Activated T-helper 1 cell treated with anti-CD3 and anti-CD28 coated beads, Interleukin-12 subunit alpha, Interleukin-12 subunit beta, Interleukin-2, Interleukin-4 antibody, amounts not matched to agents 30 ng/mL and 10 ng/mL and 1 ng/mL, durations not matched to agents 14 hours and 24 hours and 36 hours (primary cell): ENCODE measurements at regions of chr12 and their contacts with region 1.

Region 1: DNA sequence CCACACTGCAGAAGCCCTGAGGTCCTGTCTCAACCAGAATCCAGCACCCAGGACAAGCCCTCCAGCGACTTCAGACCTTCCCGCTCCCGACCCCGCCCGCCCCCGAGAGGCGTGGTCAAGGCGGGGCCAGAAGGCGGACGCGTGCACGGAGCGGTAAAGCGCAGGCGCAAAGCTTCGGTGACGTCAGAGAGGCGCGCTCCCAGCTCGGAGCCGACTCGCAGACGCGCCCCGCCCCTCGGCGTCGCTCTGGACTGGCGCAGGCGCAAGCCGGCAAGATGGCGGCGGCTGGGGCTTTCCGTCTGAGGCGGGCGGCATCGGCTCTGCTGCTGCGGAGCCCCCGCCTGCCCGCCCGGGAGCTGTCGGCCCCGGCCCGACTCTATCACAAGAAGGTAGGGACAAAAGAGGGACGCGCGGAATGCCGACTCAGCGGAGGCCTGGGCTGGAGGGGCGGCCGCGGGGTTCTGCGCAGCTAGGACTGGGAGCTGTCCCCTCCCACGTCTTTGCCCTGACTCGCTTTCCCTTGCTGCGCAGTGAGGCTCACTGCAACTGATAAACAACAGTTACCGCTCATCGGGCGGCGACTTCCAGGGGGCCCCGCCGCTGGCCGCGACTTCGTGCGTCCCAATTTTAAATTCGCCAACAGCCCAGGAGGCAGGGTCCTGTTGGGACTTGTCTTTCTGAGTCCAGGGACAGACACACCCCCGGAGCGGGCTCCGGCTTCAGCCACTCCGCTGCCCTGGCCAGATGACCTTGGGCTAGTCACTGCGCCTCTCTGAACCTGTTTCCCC is at the start of gene ISCU:
- DNase-seq: peak; percentile 99
- H3K4me3 Mint-ChIP-seq: peak within 1 kb of the TSS; percentile 100
- H3K27ac Mint-ChIP-seq: peak within 1 kb of the TSS; percentile 99
- H3K4me1 Mint-ChIP-seq: peaks cover 58% of the 10 kb centered on the region
- H3K27me3 Mint-ChIP-seq: no peaks in the 10 kb centered on the region
- total RNA-seq, gene ISCU: 73.8 and 74.9 TPM in 2 replicates

Region 2: GRCh38 chr12:107760809-107761501 is 801.6 kb before region 1 on chr12 and contains the start of gene PRDM4:
- intact Hi-C with region 1: loop called (anchors 5 kb)
- DNase-seq: peak; percentile 91
- H3K4me3 Mint-ChIP-seq: peak within 1 kb of the TSS; percentile 92
- H3K27ac Mint-ChIP-seq: peak within 1 kb of the TSS; percentile 89
- H3K4me1 Mint-ChIP-seq: peaks cover 40% of the 10 kb centered on the region
- H3K27me3 Mint-ChIP-seq: peaks cover 3% of the 10 kb centered on the region
- total RNA-seq, gene PRDM4: 28.1 and 30.2 TPM in 2 replicates

Region 3: GRCh38 chr12:108633534-108634248 is 71.1 kb after region 1 on chr12 and contains the start of gene SELPLG:
- intact Hi-C with region 1: loop called (anchors 1 kb)
- DNase-seq: peak; percentile 82
- H3K4me3 Mint-ChIP-seq: peak within 1 kb of the TSS; percentile 94
- H3K27ac Mint-ChIP-seq: peak within 1 kb of the TSS; percentile 99
- H3K4me1 Mint-ChIP-seq: peaks cover 69% of the 10 kb centered on the region
- H3K27me3 Mint-ChIP-seq: no peaks in the 10 kb centered on the region
- total RNA-seq, gene SELPLG: 51.9 and 53.5 TPM in 2 replicates

Region 4: DNA sequence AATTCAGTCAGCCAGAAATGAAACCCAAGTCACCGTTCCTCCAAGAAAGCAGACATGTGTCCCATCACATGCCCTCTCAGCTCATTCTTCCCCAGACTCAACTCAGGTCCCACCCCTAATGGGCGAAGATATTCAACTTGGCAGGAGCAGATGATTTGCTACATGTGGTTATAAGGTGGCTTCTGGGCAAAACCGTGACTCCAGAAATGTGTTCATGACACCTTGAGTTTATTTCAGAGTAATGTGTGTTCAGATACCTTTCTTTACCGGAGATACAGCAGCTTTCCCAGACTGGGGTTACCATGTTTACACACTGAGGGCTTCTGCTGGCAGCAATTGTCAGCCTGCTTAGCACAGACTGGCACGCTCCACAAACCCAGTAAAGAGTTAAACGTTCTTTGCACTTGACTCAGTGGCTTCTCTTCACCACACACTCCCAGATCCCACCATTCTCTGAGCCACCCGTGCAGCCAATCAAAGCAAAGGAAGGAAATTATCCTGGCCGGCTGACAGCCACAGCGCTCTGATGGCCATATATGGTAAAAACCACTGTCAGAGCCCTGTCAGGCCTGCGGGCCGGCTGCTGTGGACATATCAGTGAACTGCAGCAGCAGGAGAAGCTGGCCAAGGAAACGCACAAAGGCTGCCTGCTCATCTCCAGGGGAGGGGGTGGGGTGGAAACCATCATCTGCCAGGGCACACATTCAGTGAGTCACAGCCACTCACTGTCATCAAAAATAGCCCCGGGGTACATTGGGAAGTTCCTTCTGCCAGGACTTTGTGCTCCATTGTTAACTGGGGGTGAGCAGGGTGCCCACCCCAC is 128.8 kb after region 1 on chr12:
- intact Hi-C with region 1: loop called (anchors 1 kb)
- DNase-seq: peak; percentile 50
- H3K4me3 Mint-ChIP-seq: peak overlapping the region; percentile 74
- H3K27ac Mint-ChIP-seq: peak overlapping the region; percentile 95
- H3K4me1 Mint-ChIP-seq: peaks cover 64% of the 10 kb centered on the region
- H3K27me3 Mint-ChIP-seq: no peaks in the 10 kb centered on the region

Region 5: GRCh38 chr12:108856428-108857157 is 294.1 kb after region 1 on chr12:
- intact Hi-C with region 1: loop called (anchors 2 kb)
- DNase-seq: peak; percentile 45
- H3K4me3 Mint-ChIP-seq: peak overlapping the region; percentile 96
- H3K27ac Mint-ChIP-seq: peak overlapping the region; percentile 96
- H3K4me1 Mint-ChIP-seq: peaks cover 52% of the 10 kb centered on the region
- H3K27me3 Mint-ChIP-seq: peaks cover 10% of the 10 kb centered on the region

Region 6: DNA sequence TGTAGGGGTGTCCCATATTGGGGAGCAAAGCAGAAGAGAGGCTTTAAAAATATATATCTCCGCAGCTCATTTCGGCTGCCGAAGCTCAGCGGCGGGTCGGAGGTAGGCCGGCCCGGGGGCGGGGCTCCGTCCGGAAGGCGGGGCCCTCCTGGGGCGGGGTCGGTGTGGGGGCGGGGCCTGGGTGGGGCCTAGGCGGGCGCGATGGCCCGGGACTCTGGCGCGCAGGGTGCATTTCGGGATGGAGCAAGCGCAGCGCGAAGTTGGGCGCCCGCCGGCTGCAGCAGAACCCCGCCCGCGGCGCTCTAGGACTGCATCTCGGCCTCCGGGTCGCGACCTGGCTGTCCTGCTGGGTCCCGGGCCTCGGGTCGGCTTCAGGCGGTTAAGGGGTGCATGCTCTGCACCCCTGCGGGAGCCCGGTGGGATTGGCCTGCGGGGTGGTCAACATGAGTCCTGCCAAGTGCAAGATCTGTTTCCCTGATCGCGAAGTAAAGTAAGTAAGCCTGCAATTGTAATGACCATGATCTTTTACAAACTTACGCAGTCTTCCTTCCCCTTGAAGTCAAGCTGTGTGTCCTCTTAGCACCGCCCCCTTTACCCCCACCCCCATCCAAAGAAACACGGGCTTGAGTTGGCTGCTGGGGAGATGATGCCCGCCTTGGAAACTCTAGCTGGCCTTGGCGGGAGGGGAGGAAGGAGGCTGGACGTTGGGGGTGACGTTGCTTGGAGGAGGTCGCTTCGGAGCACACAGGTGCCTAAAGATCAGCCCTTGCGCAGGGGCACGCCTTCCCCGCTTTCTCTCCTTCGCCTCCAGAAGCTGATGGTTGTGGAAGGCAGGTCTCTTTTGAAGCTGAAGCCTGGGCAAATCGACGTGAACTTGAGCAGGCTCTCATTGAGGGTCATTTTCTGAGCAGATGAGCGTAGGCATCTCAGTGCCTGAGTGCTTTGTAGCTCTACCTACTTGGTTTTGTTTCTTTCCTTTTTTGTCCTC is 592.2 kb after region 1 on chr12:
- intact Hi-C with region 1: loop called (anchors 10 kb)
- DNase-seq: peak; percentile 71
- H3K4me3 Mint-ChIP-seq: peak overlapping the region; percentile 85
- H3K27ac Mint-ChIP-seq: peak overlapping the region; percentile 63
- H3K4me1 Mint-ChIP-seq: peaks cover 17% of the 10 kb centered on the region
- H3K27me3 Mint-ChIP-seq: peaks cover 15% of the 10 kb centered on the region